Spleen (tissue), 13 donors: ENCODE measurements at regions of chr16 and their contacts with region 1.

Region 1: GRCh38 chr16:57413301-57413730 is 8.7 kb downstream of the CCL17 start:
- DNase-seq: peak; percentile 87
- H3K4me3 ChIP-seq: no peak overlapping the region
- H3K27ac ChIP-seq: peak overlapping the region in 5 of 8 donors; percentile 33 to 69 (median 51)
- H3K4me1 ChIP-seq: peaks cover 5 to 60% (median 43%) of the 10 kb centered on the region in 6 donors
- H3K27me3 ChIP-seq: no peaks in the 10 kb centered on the region
- CTCF ChIP-seq: no peak
- POLR2A ChIP-seq: no peak

Region 2: GRCh38 chr16:57084257-57084770 is 329.0 kb before region 1 on chr16:
- intact Hi-C with region 1: loop called (anchors 10 kb)
- DNase-seq: peak; percentile 91
- H3K4me3 ChIP-seq: peak overlapping the region in 1 of 8 donors; percentile 8
- H3K27ac ChIP-seq: peak overlapping the region in 7 of 8 donors; percentile 53 to 86 (median 76)
- H3K4me1 ChIP-seq: peaks cover 0 to 31% (median 20%) of the 10 kb centered on the region in 6 donors
- H3K27me3 ChIP-seq: no peaks in the 10 kb centered on the region
- CTCF ChIP-seq: peak; percentile 90 to 99 (median 97)
- POLR2A ChIP-seq: no peak

Region 3: GRCh38 chr16:57300387-57301125 is 112.8 kb before region 1 on chr16:
- intact Hi-C with region 1: loop called (anchors 2 kb)
- DNase-seq: peak; percentile 99
- H3K4me3 ChIP-seq: peak overlapping the region; percentile 25 to 66 (median 46)
- H3K27ac ChIP-seq: peak overlapping the region; percentile 89 to 95 (median 90)
- H3K4me1 ChIP-seq: peaks cover 13 to 50% (median 35%) of the 10 kb centered on the region in 6 donors
- H3K27me3 ChIP-seq: peaks cover 0 to 6% (median 0%) of the 10 kb centered on the region in 7 donors
- CTCF ChIP-seq: peak; percentile 94 to 100 (median 99)
- POLR2A ChIP-seq: peak in 2 of 3 donors; percentile 40 to 67